ENCODE measurements at regions of chr12 and their contacts with region 1.

Region 1: DNA sequence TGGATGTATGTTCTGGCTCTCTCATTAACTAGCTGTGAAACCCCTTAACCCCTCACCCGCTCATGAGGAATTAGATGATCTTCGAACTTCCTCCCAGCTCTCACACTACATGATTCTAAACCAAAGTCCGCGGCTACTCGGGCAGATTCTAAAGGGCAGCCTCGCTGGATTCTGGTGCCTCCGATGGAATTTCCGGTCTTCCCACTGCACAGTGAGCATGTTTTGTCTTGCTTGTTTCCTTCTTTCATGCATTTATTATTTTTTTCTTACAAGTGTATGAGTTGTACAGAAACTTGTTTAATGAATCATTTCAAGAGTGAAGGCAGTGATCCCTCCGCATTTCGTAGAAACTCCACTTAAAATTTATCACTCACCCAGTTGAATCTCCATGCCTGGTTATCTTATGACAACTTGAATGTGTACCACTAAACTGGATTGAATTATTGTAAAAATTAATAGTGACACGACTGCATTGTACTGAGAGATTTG is 4.5 kb upstream of the HCAR3 start:
- DNase-seq: no peak
- H3K4me3 Mint-ChIP-seq: peak overlapping the region; percentile 63
- H3K27ac Mint-ChIP-seq: peak overlapping the region; percentile 96
- H3K4me1 Mint-ChIP-seq: peaks cover 37% of the 10 kb centered on the region
- H3K27me3 Mint-ChIP-seq: no peaks in the 10 kb centered on the region

Region 2: DNA sequence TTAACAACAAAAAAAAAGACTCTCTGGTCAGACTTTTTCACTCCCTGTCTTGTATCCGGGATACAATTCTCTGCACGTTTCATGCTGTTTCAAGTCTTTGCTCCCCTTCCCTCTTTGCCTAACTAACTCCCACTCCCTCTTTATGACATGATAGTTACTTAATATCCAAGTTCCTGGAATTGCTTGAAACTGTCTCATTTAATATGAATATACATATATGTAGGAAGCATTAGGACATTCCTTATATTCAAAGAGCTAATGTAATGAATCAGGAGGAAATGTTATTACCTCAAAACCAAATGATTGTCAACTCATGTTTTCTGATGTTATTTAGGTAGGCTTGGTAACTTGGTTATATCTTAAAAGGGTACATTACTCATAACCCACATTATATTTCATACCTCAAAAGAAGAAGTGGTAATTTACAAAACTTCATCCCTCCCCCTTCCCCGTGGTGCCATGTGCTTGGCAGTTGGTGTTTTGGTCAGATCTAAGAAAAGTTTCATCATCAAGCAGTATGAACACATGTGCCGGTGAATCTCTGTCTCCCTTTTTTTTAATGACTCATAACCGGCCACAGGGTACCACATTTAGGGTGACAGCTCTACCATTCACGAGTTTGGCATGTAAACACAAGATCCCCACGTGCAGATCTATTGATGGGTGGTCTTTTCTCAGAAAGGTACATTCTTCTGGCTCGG is 74.4 kb before region 1 on chr12:
- intact Hi-C with region 1: loop called (anchors 2 kb)
- DNase-seq: peak; percentile 79
- H3K4me3 Mint-ChIP-seq: peak overlapping the region; percentile 73
- H3K27ac Mint-ChIP-seq: peak overlapping the region; percentile 79
- H3K4me1 Mint-ChIP-seq: peaks cover 17% of the 10 kb centered on the region
- H3K27me3 Mint-ChIP-seq: no peaks in the 10 kb centered on the region

Region 3: GRCh38 chr12:122732170-122732569 is 11.1 kb after region 1 on chr12:
- intact Hi-C with region 1: loop called (anchors 1 kb)
- DNase-seq: peak; percentile 79
- H3K4me3 Mint-ChIP-seq: peak overlapping the region; percentile 78
- H3K27ac Mint-ChIP-seq: peak overlapping the region; percentile 86
- H3K4me1 Mint-ChIP-seq: peaks cover 62% of the 10 kb centered on the region
- H3K27me3 Mint-ChIP-seq: no peaks in the 10 kb centered on the region

Region 4: DNA sequence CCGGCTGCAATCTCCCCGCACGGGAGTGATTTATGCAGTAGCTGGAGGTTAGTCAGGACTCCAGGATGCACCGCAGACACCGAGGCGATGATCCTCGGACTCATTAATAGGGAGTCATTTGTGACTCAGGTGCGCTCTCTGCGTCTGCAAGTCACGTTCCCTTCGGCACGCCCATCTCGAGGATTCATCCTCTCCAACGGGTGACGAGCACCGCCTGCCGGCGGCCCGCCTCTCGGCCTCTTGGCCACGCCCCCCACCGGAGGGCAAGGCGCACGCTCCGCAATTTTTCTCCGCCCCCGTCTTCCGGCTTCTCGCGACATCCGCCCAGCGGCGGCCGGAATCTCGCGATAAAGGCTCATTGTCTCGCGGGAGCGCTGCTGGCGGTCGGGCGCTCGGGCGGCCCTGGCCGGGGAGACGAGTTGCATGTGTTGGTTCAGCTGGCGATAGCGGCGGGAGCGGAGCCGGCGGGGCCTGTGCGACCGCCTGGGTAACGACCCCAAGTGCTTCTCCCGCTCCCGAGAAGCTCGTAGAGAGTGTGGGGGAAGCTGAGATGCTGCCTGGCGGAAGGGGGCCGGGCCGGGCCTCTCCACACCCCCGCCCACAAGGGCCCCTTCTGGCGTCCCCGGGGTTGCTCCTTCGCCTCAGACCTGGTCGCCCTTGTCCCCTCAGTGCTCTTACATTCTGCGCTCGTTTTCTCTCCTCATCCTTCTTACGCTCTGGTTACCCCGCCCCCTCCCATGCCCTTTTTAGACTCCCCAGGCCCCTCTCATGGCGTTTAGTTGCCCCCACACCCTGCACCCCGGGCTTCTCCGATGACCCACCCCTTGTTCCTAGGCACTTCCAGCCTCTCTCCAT is 31.6 kb after region 1 on chr12 and contains the start of gene DENR:
- intact Hi-C with region 1: loop called (anchors 1 kb)
- DNase-seq: peak; percentile 100
- H3K4me3 Mint-ChIP-seq: peak within 1 kb of the TSS; percentile 93
- H3K27ac Mint-ChIP-seq: peak within 1 kb of the TSS; percentile 98
- H3K4me1 Mint-ChIP-seq: peaks cover 50% of the 10 kb centered on the region
- H3K27me3 Mint-ChIP-seq: no peaks in the 10 kb centered on the region
- total RNA-seq, gene DENR: 88.7 and 89.6 TPM in 2 replicates

Region 5: GRCh38 chr12:122871851-122872780 is 151.0 kb after region 1 on chr12:
- intact Hi-C with region 1: loop called (anchors 5 kb)
- DNase-seq: peak; percentile 84
- H3K4me3 Mint-ChIP-seq: peak overlapping the region; percentile 79
- H3K27ac Mint-ChIP-seq: peak overlapping the region; percentile 76
- H3K4me1 Mint-ChIP-seq: peaks cover 55% of the 10 kb centered on the region
- H3K27me3 Mint-ChIP-seq: peaks cover 16% of the 10 kb centered on the region

Measured in activated CD4-positive, alpha-beta T cell treated with anti-CD3 and anti-CD28 coated beads, Interleukin-2, amount 10 ng/mL, durations not matched to agents 24 days and 14 days (primary cell).